ENCODE measurements at regions of chr9 and their contacts with region 1.

Region 1: DNA sequence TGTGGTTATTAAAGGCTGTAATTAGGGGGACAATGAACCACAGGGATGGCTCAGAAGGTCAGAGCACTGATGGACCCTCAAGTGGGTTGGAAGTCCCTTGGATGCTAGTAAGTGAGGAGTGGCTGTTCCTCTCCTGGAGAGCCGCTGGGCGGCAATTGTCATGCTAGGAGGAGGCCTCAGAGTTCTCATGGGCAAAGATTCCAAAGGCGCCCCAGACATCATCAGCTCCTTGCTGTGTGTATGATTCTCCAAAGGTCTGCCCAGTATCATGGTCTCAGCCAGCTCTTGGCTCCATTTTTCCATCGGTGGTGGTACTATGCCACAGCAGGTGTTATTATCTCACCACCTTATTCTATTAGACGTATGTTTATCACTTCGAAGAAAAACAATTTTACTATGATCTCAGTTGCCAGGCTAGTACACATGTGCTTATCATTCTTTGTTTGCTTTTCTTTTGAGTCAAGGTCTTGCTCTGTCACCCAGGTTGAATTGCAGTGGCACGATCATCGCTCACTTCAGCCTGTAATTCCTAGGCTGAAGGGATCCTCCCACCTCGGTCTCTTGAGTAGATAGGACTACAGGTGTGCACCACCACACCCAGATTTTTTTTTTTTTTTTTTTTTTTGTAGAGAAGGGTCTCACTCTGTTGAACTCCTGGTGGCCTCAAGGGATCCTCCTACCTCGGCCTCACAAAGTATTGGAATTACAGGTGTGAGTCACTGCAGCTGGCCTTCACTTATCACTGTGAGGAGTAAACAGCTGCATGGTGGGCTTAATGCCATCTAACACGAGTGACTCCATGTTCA is 46.8 kb downstream of the EXOSC2 start:
- DNase-seq: no peak
- ATAC-seq: no peak
- H3K4me3 ChIP-seq: no peak overlapping the region
- H3K4me3 Mint-ChIP-seq: no peak overlapping the region
- H3K27ac ChIP-seq: no peak overlapping the region
- H3K27ac Mint-ChIP-seq: no peak overlapping the region
- H3K4me1 ChIP-seq: no peaks in the 10 kb centered on the region
- H3K4me1 Mint-ChIP-seq: peaks cover 3% of the 10 kb centered on the region
- H3K27me3 ChIP-seq: no peaks in the 10 kb centered on the region
- H3K27me3 Mint-ChIP-seq: no peaks in the 10 kb centered on the region
- CTCF ChIP-seq: no peak

Region 2: DNA sequence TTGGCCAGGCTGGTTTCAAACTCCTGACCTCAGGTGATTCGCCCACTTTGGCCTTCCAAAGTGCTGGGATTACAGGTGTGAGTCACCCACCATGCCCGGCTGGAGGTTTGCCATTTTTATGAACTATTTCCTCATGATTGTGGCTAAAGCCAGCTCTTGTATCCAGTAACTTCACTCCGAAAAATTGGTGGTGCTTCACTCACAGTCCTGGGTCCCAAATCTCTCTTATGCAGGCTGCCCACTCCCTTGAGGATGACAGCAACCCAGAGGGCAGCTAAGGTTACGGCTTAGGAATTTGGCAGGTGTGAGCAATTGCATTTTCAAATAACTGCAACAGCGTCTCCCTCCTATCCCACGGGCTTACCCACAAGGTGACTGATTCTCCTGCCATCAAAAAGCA is 184.5 kb before region 1 on chr9:
- CTCF ChIA-PET with region 1: no interaction called
- POLR2A ChIA-PET with region 1: no interaction called
- intact Hi-C with region 1: no loop called
- DNase-seq: no peak
- ATAC-seq: no peak
- H3K4me3 ChIP-seq: no peak overlapping the region
- H3K4me3 Mint-ChIP-seq: no peak overlapping the region
- H3K27ac ChIP-seq: no peak overlapping the region
- H3K27ac Mint-ChIP-seq: no peak overlapping the region
- H3K4me1 ChIP-seq: no peaks in the 10 kb centered on the region
- H3K4me1 Mint-ChIP-seq: no peaks in the 10 kb centered on the region
- H3K27me3 ChIP-seq: peaks cover 0 to 4% (median 2%) of the 10 kb centered on the region in 4 experiments
- H3K27me3 Mint-ChIP-seq: peaks cover 18% of the 10 kb centered on the region
- CTCF ChIP-seq: no peak

Region 3: DNA sequence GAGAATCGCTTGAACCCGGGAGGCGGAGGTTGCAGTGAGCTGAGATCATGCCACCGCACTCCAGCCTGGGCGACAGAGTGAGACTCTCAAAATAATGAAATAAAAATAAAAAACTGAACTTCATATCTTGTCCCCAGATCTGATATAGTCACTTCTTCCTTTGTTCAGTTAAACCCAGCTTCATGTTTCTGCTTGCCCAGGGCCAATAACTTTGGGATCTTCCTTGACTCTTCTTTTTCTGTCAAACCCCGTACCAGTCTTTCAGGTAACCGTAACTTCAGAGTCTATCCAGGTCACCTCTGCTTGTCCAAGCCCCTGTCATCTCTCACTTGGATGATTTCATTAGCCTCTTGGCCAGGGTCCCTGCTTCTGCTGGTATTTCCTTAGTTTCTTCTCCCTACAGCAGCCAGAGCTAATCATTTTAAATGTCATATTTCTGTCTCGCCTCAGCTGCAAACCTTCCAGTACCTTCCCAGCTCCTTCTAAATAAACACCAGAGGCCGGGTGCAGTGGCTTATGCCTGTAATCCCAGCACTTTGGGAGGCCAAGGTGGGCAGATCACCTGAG is 74.9 kb after region 1 on chr9:
- CTCF ChIA-PET with region 1: interaction called, 10 read pairs
- POLR2A ChIA-PET with region 1: no interaction called
- intact Hi-C with region 1: no loop called
- DNase-seq: no peak
- ATAC-seq: no peak
- H3K4me3 ChIP-seq: no peak overlapping the region
- H3K4me3 Mint-ChIP-seq: no peak overlapping the region
- H3K27ac ChIP-seq: no peak overlapping the region
- H3K27ac Mint-ChIP-seq: no peak overlapping the region
- H3K4me1 ChIP-seq: no peaks in the 10 kb centered on the region
- H3K4me1 Mint-ChIP-seq: peaks cover 5% of the 10 kb centered on the region
- H3K27me3 ChIP-seq: no peaks in the 10 kb centered on the region
- H3K27me3 Mint-ChIP-seq: no peaks in the 10 kb centered on the region
- CTCF ChIP-seq: no peak

Region 4: DNA sequence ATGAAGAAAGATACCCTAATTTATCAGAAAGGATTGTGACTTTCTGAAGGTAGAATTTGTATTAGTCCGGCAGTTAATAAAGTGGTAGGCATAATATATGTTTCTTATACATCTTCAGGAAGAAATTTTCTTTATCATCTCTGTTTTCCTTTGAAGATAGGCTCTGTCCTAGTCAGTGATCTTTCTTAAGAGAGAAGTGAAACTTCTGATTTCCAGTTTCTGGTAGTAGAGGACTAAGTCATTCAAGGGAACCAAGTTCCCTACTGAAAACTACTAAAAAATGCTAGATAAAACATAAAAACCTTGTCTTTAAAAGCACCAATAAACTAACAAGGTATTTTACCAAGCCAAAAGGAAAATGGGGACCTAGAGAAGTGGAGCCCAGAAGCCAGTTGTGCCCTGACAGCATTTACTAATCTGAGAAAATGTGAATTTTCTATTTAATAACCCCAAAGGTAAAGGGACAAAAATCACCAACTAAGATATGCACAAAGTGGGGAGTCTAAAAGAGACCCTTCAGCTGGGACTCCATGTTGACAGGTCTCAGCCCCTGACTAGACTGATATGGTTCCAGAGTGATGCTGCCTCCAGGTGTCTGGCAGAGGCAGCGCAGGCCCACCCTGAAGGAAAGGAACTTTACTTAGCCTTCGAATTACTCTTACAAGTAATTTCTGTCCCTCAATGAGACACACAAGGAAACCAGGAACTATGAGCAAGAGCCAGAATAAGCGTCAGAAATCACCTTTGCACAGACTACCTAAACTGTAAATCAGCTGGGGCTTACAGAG is 463.2 kb after region 1 on chr9:
- CTCF ChIA-PET with region 1: no interaction called
- POLR2A ChIA-PET with region 1: no interaction called
- intact Hi-C with region 1: no loop called
- DNase-seq: peak; percentile 36
- ATAC-seq: no peak
- H3K4me3 ChIP-seq: no peak overlapping the region
- H3K4me3 Mint-ChIP-seq: no peak overlapping the region
- H3K27ac ChIP-seq: no peak overlapping the region
- H3K27ac Mint-ChIP-seq: no peak overlapping the region
- H3K4me1 ChIP-seq: peaks cover 9% of the 10 kb centered on the region in 2 donors
- H3K4me1 Mint-ChIP-seq: peaks cover 9% of the 10 kb centered on the region
- H3K27me3 ChIP-seq: no peaks in the 10 kb centered on the region
- H3K27me3 Mint-ChIP-seq: no peaks in the 10 kb centered on the region
- CTCF ChIP-seq: no peak